HCT116 (cell line): ENCODE measurements at regions of chr3 and their contacts with region 1.

Region 1: GRCh38 chr3:18295171-18295920 is 129.8 kb downstream of the SATB1 start:
- DNase-seq: peak; percentile 87
- ATAC-seq: peak; percentile 99
- H3K4me3 ChIP-seq: peak overlapping the region in 1 of 2 experiments; percentile 37; a peak in 2 of 4 replicates
- H3K27ac ChIP-seq: peak overlapping the region; percentile 45
- H3K4me1 ChIP-seq: peaks cover 8 to 21% of the 10 kb centered on the region in 2 experiments; a peak in 3 of 4 replicates
- H3K27me3 ChIP-seq: no peaks in the 10 kb centered on the region
- CTCF ChIP-seq: peak; percentile 68 to 96 (median 95)
- POLR2A ChIP-seq: no peak
- RAD21 ChIP-seq: peak; percentile 96

Region 2: GRCh38 chr3:17431004-17431403 is 864.3 kb before region 1 on chr3:
- CTCF ChIA-PET with region 1: no interaction called
- POLR2A ChIA-PET with region 1: no interaction called
- RAD21 ChIA-PET with region 1: no interaction called
- intact Hi-C with region 1: loop called (anchors 1 kb)
- DNase-seq: peak; percentile 19
- ATAC-seq: peak; percentile 79
- H3K4me3 ChIP-seq: no peak overlapping the region
- H3K27ac ChIP-seq: no peak overlapping the region
- H3K4me1 ChIP-seq: no peaks in the 10 kb centered on the region
- H3K27me3 ChIP-seq: no peaks in the 10 kb centered on the region
- CTCF ChIP-seq: peak; percentile 33 to 52 (median 44); a peak in 3 of 6 replicates
- POLR2A ChIP-seq: no peak
- RAD21 ChIP-seq: peak; percentile 72

Region 3: DNA sequence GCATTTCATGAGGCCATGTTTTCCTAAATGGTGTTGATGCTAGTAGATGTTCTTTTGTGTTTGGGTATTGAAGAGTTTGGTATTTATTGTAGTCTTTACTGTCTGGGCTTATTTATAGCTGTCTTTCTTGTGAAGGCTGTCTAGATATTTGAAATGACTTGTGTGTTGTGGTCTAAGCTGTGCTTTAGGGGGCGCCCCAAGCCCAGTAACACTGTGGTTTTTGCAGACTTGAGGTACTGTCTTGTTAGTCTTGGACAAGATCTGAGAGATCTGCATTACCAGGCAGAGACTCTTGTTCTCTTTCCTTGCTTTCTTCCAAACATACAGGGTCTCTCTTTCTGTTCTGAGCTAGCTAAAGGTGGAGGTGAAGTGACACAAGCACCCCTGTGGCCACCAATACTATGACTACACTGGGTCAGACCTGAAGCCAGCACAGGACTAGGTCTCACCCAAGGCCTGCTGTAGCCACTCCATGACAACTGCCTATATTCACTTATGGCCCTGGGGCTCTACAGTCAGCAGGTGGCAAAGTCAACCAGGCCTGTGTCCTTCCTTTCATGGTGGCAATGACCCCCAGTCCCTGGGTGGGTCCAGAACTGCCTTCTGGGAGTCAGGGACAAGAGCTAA is 400.8 kb before region 1 on chr3:
- CTCF ChIA-PET with region 1: interaction called, 20 read pairs
- POLR2A ChIA-PET with region 1: interaction called, 5 read pairs
- RAD21 ChIA-PET with region 1: interaction called, 8 to 13 read pairs
- intact Hi-C with region 1: loop called (anchors 1 kb)
- DNase-seq: peak; percentile 56
- ATAC-seq: peak; percentile 95
- H3K4me3 ChIP-seq: no peak overlapping the region
- H3K27ac ChIP-seq: no peak overlapping the region
- H3K4me1 ChIP-seq: peaks cover 0 to 7% of the 10 kb centered on the region in 2 experiments; a peak in 1 of 4 replicates
- H3K27me3 ChIP-seq: no peaks in the 10 kb centered on the region
- CTCF ChIP-seq: peak; percentile 70 to 79 (median 71); a peak in 5 of 6 replicates
- POLR2A ChIP-seq: no peak
- RAD21 ChIP-seq: peak; percentile 87

Region 4: GRCh38 chr3:18098960-18099587 is 196.3 kb before region 1 on chr3:
- CTCF ChIA-PET with region 1: no interaction called
- POLR2A ChIA-PET with region 1: no interaction called
- RAD21 ChIA-PET with region 1: interaction called in 1 of 2 experiments, 3 read pairs
- intact Hi-C with region 1: loop called (anchors 2 kb)
- DNase-seq: peak; percentile 99
- ATAC-seq: peak; percentile 89
- H3K4me3 ChIP-seq: peak overlapping the region in 1 of 2 experiments; percentile 18; a peak in 2 of 4 replicates
- H3K27ac ChIP-seq: peak overlapping the region; percentile 79
- H3K4me1 ChIP-seq: peaks cover 32 to 51% of the 10 kb centered on the region in 2 experiments
- H3K27me3 ChIP-seq: no peaks in the 10 kb centered on the region
- CTCF ChIP-seq: no peak
- POLR2A ChIP-seq: no peak
- RAD21 ChIP-seq: peak; percentile 53

Region 5: DNA sequence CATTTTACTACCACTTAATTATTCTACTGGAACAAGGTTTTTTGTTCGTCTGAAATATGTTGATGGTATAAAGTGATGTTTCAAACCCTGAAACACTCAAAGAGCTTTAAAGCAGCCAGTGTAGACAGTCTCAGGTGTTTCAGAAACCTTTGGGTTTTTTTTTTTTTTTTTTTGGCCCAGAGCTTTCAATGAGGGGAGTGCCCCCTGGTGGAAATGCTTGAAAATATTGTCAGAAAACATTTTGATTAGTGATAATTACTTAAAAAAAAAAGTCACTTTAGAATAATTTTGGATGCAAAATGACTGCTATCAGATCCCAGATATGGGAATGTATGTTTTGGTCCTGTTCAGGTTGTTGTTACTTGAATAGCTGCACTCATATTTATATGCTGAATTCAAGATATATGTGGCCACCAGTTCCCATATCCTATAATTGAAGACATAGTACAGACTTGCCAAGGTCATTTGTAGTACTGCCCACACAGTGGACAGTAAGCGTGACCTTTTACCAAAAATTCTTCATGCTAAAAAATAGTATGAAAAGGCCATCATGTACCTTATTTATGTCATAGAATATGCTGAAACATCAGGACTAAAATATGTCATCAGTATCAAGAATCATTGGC is 93.9 kb after region 1 on chr3:
- CTCF ChIA-PET with region 1: no interaction called
- POLR2A ChIA-PET with region 1: no interaction called
- RAD21 ChIA-PET with region 1: no interaction called
- intact Hi-C with region 1: loop called (anchors 2 kb)
- DNase-seq: peak; percentile 7
- ATAC-seq: peak; percentile 32; the same call in 1 of the 2 replicates
- H3K4me3 ChIP-seq: no peak overlapping the region
- H3K27ac ChIP-seq: no peak overlapping the region
- H3K4me1 ChIP-seq: no peaks in the 10 kb centered on the region
- H3K27me3 ChIP-seq: no peaks in the 10 kb centered on the region
- CTCF ChIP-seq: peak; percentile 43 to 66 (median 53); a peak in 5 of 6 replicates
- POLR2A ChIP-seq: no peak
- RAD21 ChIP-seq: peak; percentile 65

Region 6: GRCh38 chr3:18812316-18812715 is 517.0 kb after region 1 on chr3:
- CTCF ChIA-PET with region 1: no interaction called
- POLR2A ChIA-PET with region 1: no interaction called
- RAD21 ChIA-PET with region 1: no interaction called
- intact Hi-C with region 1: no loop called
- DNase-seq: no peak
- ATAC-seq: no peak
- H3K4me3 ChIP-seq: no peak overlapping the region
- H3K27ac ChIP-seq: no peak overlapping the region
- H3K4me1 ChIP-seq: no peaks in the 10 kb centered on the region
- H3K27me3 ChIP-seq: no peaks in the 10 kb centered on the region
- CTCF ChIP-seq: no peak
- POLR2A ChIP-seq: no peak
- RAD21 ChIP-seq: no peak